Tibial artery (tissue), 4 donors: ENCODE measurements at regions of chr12 and their contacts with region 1.

Region 1: GRCh38 chr12:111529424-111530368 is 69.4 kb downstream of the ATXN2 start:
- DNase-seq: no peak
- H3K4me3 ChIP-seq: no peak overlapping the region
- H3K27ac ChIP-seq: no peak overlapping the region
- H3K4me1 ChIP-seq: no peaks in the 10 kb centered on the region
- H3K27me3 ChIP-seq: no peaks in the 10 kb centered on the region
- CTCF ChIP-seq: peak; percentile 55 to 56

Region 2: DNA sequence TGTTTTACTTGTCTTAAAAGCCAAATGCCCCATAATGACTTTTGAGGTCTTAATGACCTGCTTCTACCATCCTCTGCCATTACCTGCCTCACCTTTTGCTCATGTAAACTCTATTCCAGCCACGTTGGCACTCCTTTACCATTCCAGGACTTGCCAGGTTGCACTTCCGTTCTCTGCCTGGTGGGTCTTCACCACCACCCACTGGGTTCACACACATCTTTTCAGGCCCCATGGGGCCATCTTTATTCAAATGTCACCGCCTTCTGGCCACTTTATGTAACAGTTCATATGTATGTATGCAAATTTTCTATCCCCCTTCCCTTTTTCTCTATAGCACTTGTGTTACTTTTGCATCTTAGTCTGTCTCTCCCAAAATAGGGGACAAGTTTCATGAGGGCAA is 1190.9 kb before region 1 on chr12:
- intact Hi-C with region 1: no loop called
- DNase-seq: no peak
- H3K4me3 ChIP-seq: no peak overlapping the region
- H3K27ac ChIP-seq: no peak overlapping the region
- H3K4me1 ChIP-seq: no peaks in the 10 kb centered on the region
- H3K27me3 ChIP-seq: no peaks in the 10 kb centered on the region
- CTCF ChIP-seq: no peak

Region 3: GRCh38 chr12:111389635-111390034 is 140.1 kb before region 1 on chr12:
- intact Hi-C with region 1: loop called (anchors 10 kb)
- DNase-seq: no peak
- H3K4me3 ChIP-seq: no peak overlapping the region
- H3K27ac ChIP-seq: no peak overlapping the region
- H3K4me1 ChIP-seq: no peaks in the 10 kb centered on the region
- H3K27me3 ChIP-seq: peaks cover 0 to 4% of the 10 kb centered on the region in 2 donors
- CTCF ChIP-seq: no peak